ENCODE measurements at regions of chr10 and their contacts with region 1.

Region 1: DNA sequence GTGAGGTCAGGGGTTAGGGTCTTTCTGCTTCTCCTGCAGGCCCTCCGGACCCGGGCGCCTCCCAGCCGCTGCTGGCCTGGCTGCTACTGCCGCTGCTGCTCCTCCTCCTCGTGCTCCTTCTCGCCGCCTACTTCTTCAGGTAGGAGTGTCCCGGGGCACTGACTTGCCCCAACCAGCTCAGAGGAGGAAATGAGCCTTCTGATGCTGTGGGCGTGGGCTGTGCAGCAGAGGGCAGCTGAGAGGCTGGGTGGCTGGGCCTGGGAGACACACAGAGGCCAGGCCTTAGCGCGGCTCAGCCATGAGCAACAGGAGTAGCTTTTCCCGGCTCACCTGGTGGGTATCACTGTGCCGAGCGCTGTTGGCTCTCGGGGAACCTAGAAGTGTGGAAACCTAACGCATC is 78.9 kb downstream of the MKI67 start:
- DNase-seq: peak; percentile 91
- CTCF ChIP-seq: no peak

Region 2: DNA sequence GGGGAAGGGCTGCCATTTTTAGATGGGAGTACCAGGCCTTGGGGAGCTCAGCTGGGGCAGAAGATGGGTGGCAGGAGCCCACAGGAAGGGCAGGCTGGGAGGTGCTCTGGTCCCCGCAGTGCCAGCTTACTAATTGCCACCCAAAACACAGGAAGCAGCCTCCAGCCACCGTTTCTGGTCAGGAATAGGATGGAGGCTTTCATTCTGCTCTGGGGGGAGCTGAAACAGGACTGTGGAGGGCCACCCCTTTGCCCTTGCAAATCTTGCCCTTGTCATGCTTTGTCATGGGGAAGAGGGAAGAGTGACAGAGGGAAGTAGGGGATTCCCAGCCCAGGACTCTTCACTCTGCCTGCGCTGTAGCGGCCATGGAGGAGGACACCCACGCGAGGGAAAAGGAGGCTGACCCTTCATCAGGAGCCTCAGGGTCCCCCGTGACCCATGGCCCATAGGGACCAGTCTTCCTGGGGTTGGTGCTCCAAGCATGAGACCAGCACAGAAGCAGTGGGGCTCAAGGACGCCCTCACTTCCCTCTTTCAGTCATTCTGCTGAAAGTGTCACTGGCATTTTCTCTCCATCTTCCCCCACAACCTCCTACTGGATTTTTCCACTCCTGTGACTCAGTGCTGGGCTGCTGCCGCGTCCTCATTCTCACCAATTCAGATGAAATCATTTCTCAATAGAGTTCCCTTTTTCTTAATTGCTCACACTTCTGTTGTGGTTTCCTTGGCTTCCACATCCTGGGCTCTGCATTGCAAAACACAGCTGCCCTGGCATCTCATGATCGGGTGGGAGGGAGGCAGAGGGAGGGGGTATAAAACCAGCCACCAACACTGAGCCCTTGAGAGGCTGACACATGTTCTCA is 17.0 kb after region 1 on chr10:
- CTCF ChIA-PET with region 1: interaction called, 40 read pairs
- POLR2A ChIA-PET with region 1: interaction called, 4 read pairs
- DNase-seq: peak; percentile 53
- CTCF ChIP-seq: no peak

Measured in GM10248 (cell line).